H1 (cell line): ENCODE measurements at regions of chr4 and their contacts with region 1.

Region 1: GRCh38 chr4:78343682-78344081 is 207.9 kb upstream of the ANXA3 start:
- DNase-seq: no peak
- H3K4me3 ChIP-seq: no peak overlapping the region
- H3K27ac ChIP-seq: no peak overlapping the region
- H3K4me1 ChIP-seq: no peaks in the 10 kb centered on the region
- H3K27me3 ChIP-seq: no peaks in the 10 kb centered on the region
- CTCF ChIP-seq: no peak
- EP300 ChIP-seq: no peak
- POLR2A ChIP-seq: no peak
- RAD21 ChIP-seq: no peak

Region 2: DNA sequence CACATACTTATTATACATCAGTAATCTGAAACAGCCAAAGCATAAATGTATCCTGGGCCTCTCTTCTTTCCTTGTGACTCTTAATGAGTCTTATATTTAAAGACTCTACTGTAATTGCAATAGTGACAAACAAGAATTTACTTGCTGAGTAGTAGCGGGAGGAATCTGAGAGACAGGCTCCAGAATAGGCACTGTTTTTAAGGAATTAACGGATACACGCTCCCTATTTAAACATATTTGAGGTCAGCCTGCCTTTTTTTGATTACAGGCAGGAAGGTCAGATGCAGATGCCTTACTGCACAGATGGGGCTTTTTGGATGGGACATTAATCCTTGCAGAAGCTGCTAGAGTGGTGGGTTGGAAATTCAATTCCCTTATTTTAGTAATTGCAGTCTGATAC is 11.6 kb after region 1 on chr4:
- CTCF ChIA-PET with region 1: interaction called, 18 read pairs
- POLR2A ChIA-PET with region 1: interaction called, 25 read pairs
- DNase-seq: no peak
- H3K4me3 ChIP-seq: no peak overlapping the region
- H3K27ac ChIP-seq: no peak overlapping the region
- H3K4me1 ChIP-seq: peaks cover 0 to 13% (median 7%) of the 10 kb centered on the region in 4 experiments; a peak in 4 of 7 replicates
- H3K27me3 ChIP-seq: no peaks in the 10 kb centered on the region
- CTCF ChIP-seq: no peak
- EP300 ChIP-seq: no peak
- POLR2A ChIP-seq: no peak
- RAD21 ChIP-seq: no peak

Region 3: GRCh38 chr4:78362310-78362709 is 18.6 kb after region 1 on chr4:
- CTCF ChIA-PET with region 1: interaction called, 18 read pairs
- POLR2A ChIA-PET with region 1: interaction called, 7 read pairs
- DNase-seq: peak in 1 of 2 experiments; percentile 60
- H3K4me3 ChIP-seq: no peak overlapping the region
- H3K27ac ChIP-seq: no peak overlapping the region
- H3K4me1 ChIP-seq: peaks cover 5 to 27% (median 17%) of the 10 kb centered on the region in 4 experiments
- H3K27me3 ChIP-seq: no peaks in the 10 kb centered on the region
- CTCF ChIP-seq: no peak
- EP300 ChIP-seq: no peak
- POLR2A ChIP-seq: no peak
- RAD21 ChIP-seq: peak; percentile 4 to 24; a peak in 1 of 4 replicates

Region 4: DNA sequence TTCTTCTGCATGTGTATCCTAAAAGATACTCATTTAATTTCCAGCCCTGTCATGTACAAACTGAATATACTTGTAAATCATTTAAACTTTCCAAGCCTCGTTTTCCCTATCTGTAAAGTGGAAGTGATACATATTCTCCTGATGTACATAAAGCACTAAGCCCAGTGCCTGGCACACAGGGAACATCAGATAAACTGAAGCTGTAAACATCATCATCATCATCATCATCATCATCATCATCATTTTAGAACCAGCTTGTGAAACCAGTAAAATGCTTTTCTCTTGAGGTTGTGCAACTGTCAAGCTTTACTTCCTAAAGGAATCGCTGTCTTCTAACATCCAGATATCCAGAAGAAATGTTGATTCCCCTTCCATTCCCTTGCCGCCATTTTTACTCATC is 124.6 kb after region 1 on chr4:
- CTCF ChIA-PET with region 1: no interaction called
- POLR2A ChIA-PET with region 1: no interaction called
- DNase-seq: no peak
- H3K4me3 ChIP-seq: no peak overlapping the region
- H3K27ac ChIP-seq: no peak overlapping the region; the same call in 1 of the 2 replicates
- H3K4me1 ChIP-seq: no peaks in the 10 kb centered on the region
- H3K27me3 ChIP-seq: no peaks in the 10 kb centered on the region
- CTCF ChIP-seq: no peak
- EP300 ChIP-seq: no peak
- POLR2A ChIP-seq: no peak
- RAD21 ChIP-seq: no peak